Left ventricle myocardium superior (tissue), 1 donor: ENCODE measurements at regions of chr12 and their contacts with region 1.

Region 1: GRCh38 chr12:122958198-122958888 is 7.9 kb downstream of the ABCB9 start:
- DNase-seq: no peak
- ATAC-seq: peak; percentile 27

Region 2: GRCh38 chr12:122793685-122794106 is 164.6 kb before region 1 on chr12:
- intact Hi-C with region 1: loop called (anchors 5 kb)
- DNase-seq: no peak
- ATAC-seq: peak; percentile 51